PC-9 (cell line): ENCODE measurements at regions of chr9 and their contacts with region 1.

Region 1: DNA sequence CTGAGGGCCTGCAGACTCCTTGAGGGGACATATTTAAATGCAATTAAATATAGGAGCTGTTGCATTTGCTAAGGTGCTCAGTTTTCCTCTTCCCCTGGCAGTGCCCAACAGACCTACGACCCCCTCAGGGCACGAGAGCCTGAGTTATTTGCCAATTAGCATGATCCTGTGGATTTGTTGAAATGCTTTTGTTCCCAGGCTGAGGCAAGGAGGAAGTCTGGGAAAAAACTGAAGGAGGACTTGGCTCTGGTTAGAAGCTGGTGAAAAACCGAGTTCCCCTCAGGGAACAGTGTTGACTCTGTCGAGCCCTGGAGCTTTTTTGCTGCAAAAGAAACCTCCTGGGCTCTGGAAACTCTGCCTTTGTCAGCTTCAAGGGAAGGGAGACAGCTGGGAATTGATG is 103.6 kb upstream of the SHB start:
- DNase-seq: no peak
- H3K4me3 ChIP-seq: no peak overlapping the region
- H3K27ac ChIP-seq: peak overlapping the region; percentile 100
- H3K4me1 ChIP-seq: peaks cover 21% of the 10 kb centered on the region
- H3K27me3 ChIP-seq: no peaks in the 10 kb centered on the region
- CTCF ChIP-seq: no peak

Region 2: GRCh38 chr9:38017149-38017884 is 155.3 kb before region 1 on chr9:
- CTCF ChIA-PET with region 1: no interaction called
- POLR2A ChIA-PET with region 1: no interaction called
- intact Hi-C with region 1: loop called (anchors 5 kb)
- DNase-seq: peak; percentile 51 to 80
- H3K4me3 ChIP-seq: no peak overlapping the region
- H3K27ac ChIP-seq: peak overlapping the region; percentile 85
- H3K4me1 ChIP-seq: peaks cover 64% of the 10 kb centered on the region
- H3K27me3 ChIP-seq: no peaks in the 10 kb centered on the region
- CTCF ChIP-seq: peak; percentile 39

Region 3: DNA sequence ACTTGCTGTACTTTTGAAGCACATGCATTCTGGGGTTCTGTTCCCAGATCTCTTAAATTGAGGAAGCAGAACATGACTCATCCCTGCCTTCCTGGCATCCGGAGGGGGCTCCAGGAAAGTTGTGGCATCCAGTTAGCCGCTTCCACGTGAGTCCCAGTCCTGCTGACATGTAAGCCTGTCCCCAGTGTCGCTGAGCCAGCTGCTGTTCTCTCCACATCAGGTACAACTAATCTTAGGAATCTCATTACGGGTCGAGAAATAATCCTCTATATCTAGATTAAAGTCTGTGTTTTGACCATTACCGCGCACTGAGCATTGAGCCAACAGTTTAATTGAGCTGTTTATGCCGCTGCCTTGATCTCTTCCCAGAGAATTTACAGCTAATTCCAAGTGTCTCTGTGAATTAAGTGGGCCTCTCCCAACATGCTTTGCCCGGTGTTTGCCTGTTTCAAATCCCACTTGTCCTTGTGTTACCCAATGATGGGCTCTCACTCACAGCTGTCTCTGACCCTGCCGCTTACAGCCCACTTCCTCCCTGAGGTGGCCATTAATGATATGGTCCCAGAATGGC is 93.0 kb before region 1 on chr9:
- CTCF ChIA-PET with region 1: no interaction called
- POLR2A ChIA-PET with region 1: interaction called, 4 read pairs
- intact Hi-C with region 1: loop called (anchors 5 kb)
- DNase-seq: no peak
- H3K4me3 ChIP-seq: no peak overlapping the region
- H3K27ac ChIP-seq: no peak overlapping the region
- H3K4me1 ChIP-seq: peaks cover 25% of the 10 kb centered on the region
- H3K27me3 ChIP-seq: no peaks in the 10 kb centered on the region
- CTCF ChIP-seq: no peak

Region 4: DNA sequence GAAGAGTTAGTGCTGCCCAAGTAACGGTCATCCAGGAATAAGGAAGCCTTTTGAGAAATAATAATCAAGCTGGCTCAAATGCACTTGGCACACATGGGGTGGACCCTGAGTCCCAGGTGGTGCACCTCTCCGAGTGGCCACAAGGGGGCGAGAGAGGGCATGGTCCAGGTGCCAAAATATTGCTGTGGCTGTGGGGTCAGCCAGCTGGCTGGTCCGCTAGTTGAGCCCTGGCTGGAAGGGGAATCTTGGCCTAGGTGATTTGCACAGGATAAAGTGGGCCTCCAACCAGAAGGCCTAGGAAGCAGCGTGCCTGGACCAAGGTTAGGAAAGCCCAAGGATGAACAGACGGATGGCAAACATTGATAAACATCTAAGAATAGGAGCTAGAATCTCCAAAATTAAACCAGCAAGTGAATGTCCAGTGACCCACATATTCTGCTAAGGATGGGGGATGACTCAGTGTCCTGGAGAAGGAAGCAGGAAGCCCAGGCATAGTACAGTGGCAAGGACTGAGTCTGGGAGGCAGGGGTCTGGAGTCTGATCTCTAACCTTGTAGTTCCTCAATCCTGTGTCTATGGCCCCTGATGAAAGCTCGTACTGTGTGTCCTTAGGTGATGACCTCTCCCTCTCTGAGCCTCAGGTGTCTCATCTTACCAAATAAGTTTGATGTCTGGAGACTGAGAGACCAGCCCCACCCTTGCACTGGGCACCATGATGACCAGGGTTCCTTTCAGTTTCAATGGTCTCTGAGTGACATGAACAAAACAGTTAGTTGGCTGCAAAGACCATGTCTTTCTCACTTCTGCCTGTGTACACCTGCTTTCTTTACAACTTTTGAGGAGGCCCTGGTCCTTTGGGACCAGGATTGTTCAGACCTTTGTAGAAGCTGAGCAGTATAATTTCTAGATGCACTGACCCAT is 84.3 kb before region 1 on chr9:
- CTCF ChIA-PET with region 1: interaction called, 17 read pairs
- POLR2A ChIA-PET with region 1: interaction called, 4 read pairs
- intact Hi-C with region 1: loop called (anchors 5 kb)
- DNase-seq: peak in 1 of 2 experiments; percentile 49
- H3K4me3 ChIP-seq: no peak overlapping the region
- H3K27ac ChIP-seq: no peak overlapping the region
- H3K4me1 ChIP-seq: peaks cover 22% of the 10 kb centered on the region
- H3K27me3 ChIP-seq: no peaks in the 10 kb centered on the region
- CTCF ChIP-seq: peak; percentile 93

Region 5: GRCh38 chr9:38263532-38263931 is 90.9 kb after region 1 on chr9:
- CTCF ChIA-PET with region 1: interaction called, 3 read pairs
- POLR2A ChIA-PET with region 1: no interaction called
- intact Hi-C with region 1: loop called (anchors 2 kb)
- DNase-seq: peak in 1 of 2 experiments; percentile 37
- H3K4me3 ChIP-seq: no peak overlapping the region
- H3K27ac ChIP-seq: no peak overlapping the region
- H3K4me1 ChIP-seq: no peaks in the 10 kb centered on the region; the same call in 1 of the 2 replicates
- H3K27me3 ChIP-seq: no peaks in the 10 kb centered on the region
- CTCF ChIP-seq: peak; percentile 59